SK-N-SH (cell line): ENCODE measurements at regions of chr17 and their contacts with region 1.

Region 1: GRCh38 chr17:60720763-60721531 is 43.3 kb downstream of the BCAS3 start:
- DNase-seq: peak; percentile 66
- H3K4me3 ChIP-seq: peak overlapping the region in 1 of 2 experiments; percentile 25; a peak in 2 of 4 replicates
- H3K27ac ChIP-seq: peak overlapping the region; percentile 8 to 51; a peak in 2 of 4 replicates
- H3K4me1 ChIP-seq: peaks cover 0 to 5% of the 10 kb centered on the region in 2 experiments; a peak in 2 of 4 replicates
- H3K27me3 ChIP-seq: no peaks in the 10 kb centered on the region
- CTCF ChIP-seq: peak; percentile 100
- EP300 ChIP-seq: no peak
- RAD21 ChIP-seq: peak; percentile 98

Region 2: DNA sequence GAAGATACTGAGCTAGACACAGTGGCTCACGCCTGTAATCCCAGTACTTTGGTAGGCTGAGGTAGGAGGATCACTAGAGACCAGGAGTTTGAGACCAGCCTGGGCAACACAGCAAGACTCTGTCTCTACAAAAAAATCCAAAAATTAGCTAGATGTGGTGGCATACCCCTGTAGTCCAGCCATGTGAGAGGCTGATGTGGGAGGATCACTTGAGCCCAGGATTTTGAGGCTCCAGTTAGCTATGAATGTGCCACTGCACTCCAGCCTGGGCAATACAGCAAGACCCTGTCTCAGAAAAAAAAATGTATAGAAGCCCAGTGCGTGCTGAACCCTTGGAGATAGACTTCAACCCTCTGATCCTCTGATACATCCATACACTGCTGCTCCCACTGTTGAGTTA is 128.2 kb before region 1 on chr17:
- CTCF ChIA-PET with region 1: no interaction called
- POLR2A ChIA-PET with region 1: no interaction called
- DNase-seq: no peak
- H3K4me3 ChIP-seq: no peak overlapping the region
- H3K27ac ChIP-seq: no peak overlapping the region
- H3K4me1 ChIP-seq: no peaks in the 10 kb centered on the region
- H3K27me3 ChIP-seq: no peaks in the 10 kb centered on the region
- CTCF ChIP-seq: no peak
- EP300 ChIP-seq: no peak
- RAD21 ChIP-seq: no peak

Region 3: DNA sequence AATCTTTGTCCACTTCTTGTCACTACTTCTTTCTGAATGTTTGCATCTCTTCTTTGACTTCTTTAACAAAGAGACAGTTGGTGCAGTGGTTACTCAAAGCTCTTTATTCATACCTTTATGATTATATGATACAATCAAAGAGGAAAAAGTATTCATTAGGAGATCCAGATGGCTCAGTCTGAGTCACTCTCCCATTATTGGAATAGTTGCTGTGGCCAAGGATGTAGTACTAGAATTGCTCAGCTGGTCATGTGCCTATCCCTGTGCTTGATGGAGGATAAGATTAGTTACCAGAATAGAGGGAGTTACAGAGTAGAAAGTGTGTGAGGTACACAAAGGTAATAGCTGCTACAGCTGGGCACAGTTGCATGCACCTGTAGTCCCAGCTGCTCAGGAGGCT is 25.0 kb before region 1 on chr17:
- CTCF ChIA-PET with region 1: interaction called, 13 read pairs
- POLR2A ChIA-PET with region 1: no interaction called
- DNase-seq: no peak
- H3K4me3 ChIP-seq: no peak overlapping the region
- H3K27ac ChIP-seq: no peak overlapping the region
- H3K4me1 ChIP-seq: no peaks in the 10 kb centered on the region
- H3K27me3 ChIP-seq: no peaks in the 10 kb centered on the region
- CTCF ChIP-seq: no peak
- EP300 ChIP-seq: 0 out of 4 replicates have a peak, but pooled peaks of 1 of the 2 experiments have one; percentile 30
- RAD21 ChIP-seq: no peak

Region 4: DNA sequence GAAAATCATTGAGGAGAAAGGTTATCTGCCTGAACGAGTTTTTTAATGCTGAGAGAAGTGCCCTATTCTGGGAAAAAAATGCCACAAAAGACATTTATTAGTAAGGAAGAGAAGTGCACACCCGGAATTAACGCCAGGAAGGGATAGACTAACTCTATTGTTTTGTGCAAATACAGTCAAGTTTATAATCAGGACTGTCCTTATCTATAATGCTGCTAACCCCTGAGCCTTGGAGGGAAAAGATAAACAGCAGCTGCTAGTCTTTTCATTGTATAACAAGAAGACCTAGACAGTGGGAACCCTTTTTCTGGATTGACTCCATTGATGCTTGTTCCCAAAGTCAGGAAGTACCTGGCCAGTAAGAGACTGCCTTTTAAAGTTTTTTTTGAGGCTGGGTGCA is 16.8 kb before region 1 on chr17:
- CTCF ChIA-PET with region 1: interaction called, 35 read pairs
- POLR2A ChIA-PET with region 1: no interaction called
- DNase-seq: no peak
- H3K4me3 ChIP-seq: no peak overlapping the region
- H3K27ac ChIP-seq: no peak overlapping the region
- H3K4me1 ChIP-seq: no peaks in the 10 kb centered on the region
- H3K27me3 ChIP-seq: no peaks in the 10 kb centered on the region
- CTCF ChIP-seq: no peak
- EP300 ChIP-seq: no peak
- RAD21 ChIP-seq: no peak

Region 5: DNA sequence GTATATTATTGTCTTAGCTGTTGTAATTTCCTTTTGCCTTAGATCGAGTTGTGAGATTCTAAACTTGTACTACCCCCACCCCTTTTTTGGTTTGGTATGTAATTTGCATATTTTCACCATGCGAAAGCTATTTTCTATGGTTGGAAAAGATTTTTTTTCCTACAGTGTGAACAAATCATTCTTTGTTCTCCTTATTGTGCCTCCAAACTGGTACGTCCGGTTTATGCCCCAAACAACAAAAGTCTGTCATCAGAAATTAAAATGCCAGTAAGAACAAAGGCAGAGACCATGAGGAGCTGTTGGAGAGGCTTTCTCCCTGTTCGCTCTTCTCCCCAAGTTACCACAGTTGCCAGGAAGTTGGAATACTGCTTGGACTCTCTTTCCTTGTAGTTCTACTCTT is 22.9 kb after region 1 on chr17:
- CTCF ChIA-PET with region 1: interaction called, 27 read pairs
- POLR2A ChIA-PET with region 1: no interaction called
- DNase-seq: no peak
- H3K4me3 ChIP-seq: peak overlapping the region; percentile 21 to 27; a peak in 3 of 4 replicates
- H3K27ac ChIP-seq: peak overlapping the region; percentile 79 to 84
- H3K4me1 ChIP-seq: peaks cover 10 to 17% of the 10 kb centered on the region in 2 experiments; a peak in 3 of 4 replicates
- H3K27me3 ChIP-seq: no peaks in the 10 kb centered on the region
- CTCF ChIP-seq: no peak
- EP300 ChIP-seq: 0 out of 4 replicates have a peak, but pooled peaks of 1 of the 2 experiments have one; percentile 36
- RAD21 ChIP-seq: no peak